Mammary epithelial cell (primary cell): ENCODE measurements at regions of chr12 and their contacts with region 1.

Region 1: DNA sequence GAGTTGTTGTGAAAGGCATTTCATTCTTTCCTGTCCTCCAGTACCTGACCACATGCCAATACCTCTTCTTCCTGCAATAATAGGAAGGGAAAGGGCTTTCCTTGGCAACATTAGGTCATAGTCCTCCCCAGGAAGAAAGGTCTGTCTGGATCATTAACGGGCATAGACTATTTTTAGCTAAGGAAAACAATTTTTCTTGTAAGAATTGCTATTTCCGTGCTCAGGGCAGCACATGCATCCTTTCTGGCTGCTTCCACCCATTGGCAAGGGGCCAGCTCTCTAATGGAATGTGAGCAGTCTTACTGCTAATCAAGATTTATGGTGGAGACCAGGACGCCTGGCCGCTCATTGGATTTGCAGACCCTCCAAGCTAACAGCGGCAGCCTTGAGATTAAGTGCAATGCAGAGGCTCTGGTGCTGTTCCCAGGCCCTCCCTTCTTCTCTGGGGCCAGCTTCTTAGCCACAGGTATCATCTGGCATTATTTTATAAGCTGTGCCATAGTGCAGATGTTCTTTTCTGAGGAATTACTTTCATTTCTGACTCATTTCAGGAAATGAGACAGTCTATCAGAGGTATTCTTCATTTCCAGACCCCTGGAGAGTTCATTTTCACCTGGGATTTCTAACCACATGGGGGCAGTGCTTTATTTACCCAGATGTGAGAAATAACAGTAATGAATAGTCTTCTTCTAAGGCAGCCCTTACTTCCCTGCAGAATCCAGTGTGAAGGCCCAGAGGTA is 52.9 kb downstream of the ANO6 start:
- DNase-seq: peak; percentile 88
- H3K4me3 ChIP-seq: peak overlapping the region in 2 of 3 experiments; percentile 2 to 35
- H3K27ac ChIP-seq: peak overlapping the region; percentile 82
- H3K4me1 ChIP-seq: peaks cover 36% of the 10 kb centered on the region
- H3K27me3 ChIP-seq: no peaks in the 10 kb centered on the region
- CTCF ChIP-seq: peak; percentile 54 to 57

Region 2: DNA sequence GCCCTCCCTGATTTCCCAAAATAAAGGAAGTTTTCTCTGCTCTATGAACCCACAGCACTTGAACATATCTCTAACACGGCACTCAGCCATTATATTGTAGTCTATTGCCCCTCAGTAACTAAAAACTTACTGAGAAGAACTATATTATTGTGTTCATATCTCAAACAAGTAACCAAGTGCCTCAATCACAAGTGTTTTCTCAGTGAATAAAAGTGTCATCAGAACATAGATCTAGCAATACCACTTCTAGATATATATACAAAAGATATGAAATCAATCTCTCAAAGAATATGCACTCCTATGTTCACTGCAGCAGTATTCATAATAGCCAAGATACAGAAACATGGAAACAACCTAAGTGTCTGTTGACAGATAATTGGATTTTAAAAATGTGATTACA is 530.8 kb before region 1 on chr12:
- CTCF ChIA-PET with region 1: no interaction called
- dilution Hi-C with region 1: no loop called
- in situ Hi-C with region 1: no loop called
- intact Hi-C with region 1: no loop called
- DNase-seq: no peak
- H3K4me3 ChIP-seq: no peak overlapping the region
- H3K27ac ChIP-seq: no peak overlapping the region
- H3K4me1 ChIP-seq: no peaks in the 10 kb centered on the region
- H3K27me3 ChIP-seq: no peaks in the 10 kb centered on the region
- CTCF ChIP-seq: no peak

Region 3: DNA sequence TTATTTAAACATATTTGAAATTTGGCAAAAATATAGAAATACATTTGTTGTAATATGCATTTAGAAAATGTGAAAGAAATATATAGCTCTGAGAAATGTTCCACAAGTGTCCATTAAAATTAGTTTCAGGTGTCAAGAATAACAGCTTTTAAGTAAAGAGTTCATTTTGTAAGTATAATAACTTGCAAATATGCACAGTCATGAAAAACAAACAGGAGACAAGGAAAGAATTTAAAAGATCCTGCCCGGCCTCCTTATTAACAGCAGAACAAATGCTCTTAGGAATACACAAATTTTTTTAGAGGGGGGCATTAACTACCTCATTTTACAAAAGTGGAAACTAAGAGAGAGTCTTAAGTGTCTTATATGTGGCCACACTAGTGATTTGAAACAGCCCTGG is 140.2 kb before region 1 on chr12:
- CTCF ChIA-PET with region 1: no interaction called
- dilution Hi-C with region 1: no loop called
- in situ Hi-C with region 1: no loop called
- intact Hi-C with region 1: no loop called
- DNase-seq: no peak
- H3K4me3 ChIP-seq: no peak overlapping the region
- H3K27ac ChIP-seq: no peak overlapping the region
- H3K4me1 ChIP-seq: no peaks in the 10 kb centered on the region
- H3K27me3 ChIP-seq: peaks cover 3% of the 10 kb centered on the region
- CTCF ChIP-seq: no peak

Region 4: DNA sequence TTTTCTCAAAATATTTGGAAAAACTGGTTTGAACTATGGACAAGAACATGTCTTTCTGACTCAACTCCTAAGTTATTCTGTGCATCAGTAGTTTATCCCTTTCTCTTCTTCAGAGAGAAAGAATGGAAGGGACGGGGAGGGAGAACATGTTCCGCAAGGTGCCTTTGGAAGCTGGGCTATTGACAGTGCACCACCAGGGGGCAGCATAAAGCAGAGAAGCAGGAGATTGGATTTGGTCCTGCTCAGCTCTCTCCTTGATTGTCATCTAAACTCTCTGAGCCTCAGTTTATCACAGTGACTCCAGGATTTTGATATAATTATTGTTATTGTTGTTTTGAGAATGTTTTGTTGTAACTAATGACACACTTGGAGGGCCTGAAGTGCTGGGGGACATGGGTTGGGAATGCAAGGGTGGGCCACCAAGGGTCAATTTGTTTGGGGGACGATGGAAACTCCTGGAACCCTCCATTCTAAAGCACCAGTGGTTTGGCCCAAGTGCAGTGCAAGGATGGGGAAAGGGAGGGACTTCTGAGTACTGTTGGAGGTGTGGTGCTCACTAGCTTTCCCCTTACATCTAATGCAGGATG is 98.3 kb before region 1 on chr12:
- CTCF ChIA-PET with region 1: no interaction called
- dilution Hi-C with region 1: no loop called
- in situ Hi-C with region 1: no loop called
- intact Hi-C with region 1: loop called (anchors 1 kb)
- DNase-seq: peak; percentile 44
- H3K4me3 ChIP-seq: no peak overlapping the region
- H3K27ac ChIP-seq: no peak overlapping the region
- H3K4me1 ChIP-seq: no peaks in the 10 kb centered on the region
- H3K27me3 ChIP-seq: no peaks in the 10 kb centered on the region
- CTCF ChIP-seq: peak; percentile 95

Region 5: DNA sequence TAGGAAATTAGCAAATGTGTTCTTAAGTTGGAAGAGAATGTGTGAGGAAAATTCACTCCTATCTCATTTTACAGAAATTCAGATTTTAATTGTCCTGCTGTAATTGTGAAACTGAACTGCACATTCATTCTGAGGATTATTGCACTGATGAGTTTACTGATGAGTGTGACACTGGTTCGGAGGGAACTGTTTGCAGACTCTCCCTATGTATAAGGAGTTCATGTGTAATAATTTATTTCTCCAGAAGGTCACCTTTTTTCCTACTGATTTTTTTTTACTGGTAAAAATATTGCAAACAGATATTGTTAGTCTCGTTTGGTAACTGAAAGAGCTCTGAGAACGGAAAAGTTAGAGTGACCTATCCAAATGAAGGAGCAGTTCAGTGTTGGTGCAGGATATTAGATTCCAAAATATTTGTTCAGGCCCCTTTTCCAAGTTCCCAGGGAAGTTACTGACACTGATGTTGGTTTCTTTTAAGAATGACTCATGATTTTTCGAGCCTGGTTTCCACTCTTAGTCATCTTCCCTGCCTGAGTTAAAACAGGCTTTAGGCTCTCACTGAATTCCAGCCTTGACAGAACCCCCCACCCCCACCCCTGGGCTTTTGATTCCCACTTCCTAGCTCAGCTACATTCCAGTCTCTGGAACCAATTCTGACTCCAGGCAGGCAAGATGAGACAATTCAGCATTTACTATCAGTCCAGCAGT is 34.5 kb before region 1 on chr12:
- CTCF ChIA-PET with region 1: interaction called, 5 read pairs
- dilution Hi-C with region 1: no loop called
- in situ Hi-C with region 1: no loop called
- intact Hi-C with region 1: loop called (anchors 1 kb)
- DNase-seq: peak; percentile 96
- H3K4me3 ChIP-seq: peak overlapping the region in 1 of 3 experiments; percentile 28
- H3K27ac ChIP-seq: peak overlapping the region; percentile 98
- H3K4me1 ChIP-seq: peaks cover 51% of the 10 kb centered on the region
- H3K27me3 ChIP-seq: no peaks in the 10 kb centered on the region
- CTCF ChIP-seq: no peak

Region 6: DNA sequence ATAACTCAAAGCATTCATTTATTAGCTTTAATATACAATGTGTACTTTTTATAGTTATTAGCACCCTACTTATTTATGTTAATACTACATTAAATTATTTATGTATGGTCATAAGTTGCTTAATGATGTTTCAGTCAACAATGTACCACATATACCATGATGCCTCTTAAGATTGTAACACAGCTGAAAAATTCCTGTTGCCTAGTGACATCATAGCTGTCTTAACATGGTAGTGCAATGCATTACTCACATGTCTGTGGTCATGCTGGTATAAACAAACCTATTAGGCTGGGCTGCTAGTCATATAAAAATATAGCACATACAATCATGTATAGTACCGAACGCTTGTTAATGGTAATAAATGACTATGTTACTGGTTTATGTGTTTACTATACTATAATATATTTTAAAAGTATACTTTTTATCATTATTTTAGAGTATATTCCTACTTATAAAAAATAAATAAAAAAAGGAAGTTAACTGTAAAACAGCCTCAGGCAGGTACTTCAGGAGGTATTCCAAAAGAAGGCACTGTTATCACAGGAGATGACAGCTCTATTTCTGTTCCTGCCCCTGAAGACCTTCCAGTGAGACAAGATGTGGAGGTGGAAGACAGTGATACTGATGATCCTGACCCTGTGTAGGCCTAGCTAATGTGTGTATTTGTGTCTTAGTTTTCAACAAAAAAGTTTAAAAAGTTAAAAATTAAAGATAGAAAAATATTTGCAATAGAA is 67.7 kb after region 1 on chr12:
- CTCF ChIA-PET with region 1: no interaction called
- dilution Hi-C with region 1: no loop called
- in situ Hi-C with region 1: no loop called
- intact Hi-C with region 1: loop called (anchors 2 kb)
- DNase-seq: peak; percentile 88
- H3K4me3 ChIP-seq: no peak overlapping the region
- H3K27ac ChIP-seq: peak overlapping the region; percentile 82
- H3K4me1 ChIP-seq: peaks cover 17% of the 10 kb centered on the region
- H3K27me3 ChIP-seq: no peaks in the 10 kb centered on the region
- CTCF ChIP-seq: no peak

Region 7: GRCh38 chr12:45388545-45388944 is 119.7 kb after region 1 on chr12:
- CTCF ChIA-PET with region 1: interaction called, 4 read pairs
- dilution Hi-C with region 1: no loop called
- in situ Hi-C with region 1: no loop called
- intact Hi-C with region 1: loop called (anchors 1 kb)
- DNase-seq: peak; percentile 16
- H3K4me3 ChIP-seq: no peak overlapping the region
- H3K27ac ChIP-seq: no peak overlapping the region
- H3K4me1 ChIP-seq: no peaks in the 10 kb centered on the region
- H3K27me3 ChIP-seq: no peaks in the 10 kb centered on the region
- CTCF ChIP-seq: peak; percentile 49 to 65

Region 8: DNA sequence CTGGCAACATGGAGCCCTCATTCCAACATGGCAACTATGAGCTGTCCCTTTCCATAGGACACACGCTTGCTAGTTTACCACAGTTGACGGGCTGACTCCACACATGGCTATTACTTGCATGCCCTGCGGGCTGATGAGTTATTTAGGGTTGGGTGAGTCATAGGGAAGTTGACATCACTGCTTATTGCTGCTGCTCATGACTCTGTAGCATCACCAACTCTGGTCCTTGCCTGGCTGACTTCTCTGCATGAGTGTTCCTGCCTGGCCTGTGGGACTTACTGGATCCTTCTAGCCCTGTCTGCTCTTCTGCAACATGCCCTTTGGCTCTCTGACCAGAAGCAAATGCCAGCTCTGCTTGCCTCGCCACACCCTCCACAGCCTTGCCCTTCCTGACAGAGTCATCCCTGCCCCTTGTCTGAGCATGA is 146.6 kb after region 1 on chr12:
- CTCF ChIA-PET with region 1: no interaction called
- dilution Hi-C with region 1: no loop called
- in situ Hi-C with region 1: no loop called
- intact Hi-C with region 1: loop called (anchors 1 kb)
- DNase-seq: peak; percentile 99
- H3K4me3 ChIP-seq: no peak overlapping the region
- H3K27ac ChIP-seq: peak overlapping the region; percentile 31
- H3K4me1 ChIP-seq: peaks cover 7% of the 10 kb centered on the region
- H3K27me3 ChIP-seq: no peaks in the 10 kb centered on the region
- CTCF ChIP-seq: no peak